PC-9 (cell line): ENCODE measurements at regions of chr11 and their contacts with region 1.

Region 1: GRCh38 chr11:62678770-62679696 is at the start of gene UBXN1:
- DNase-seq: peak; percentile 78 to 80
- H3K4me3 ChIP-seq: peak within 1 kb of the TSS; percentile 76
- H3K27ac ChIP-seq: peak within 1 kb of the TSS; percentile 37
- H3K4me1 ChIP-seq: peaks cover 29% of the 10 kb centered on the region
- H3K27me3 ChIP-seq: no peaks in the 10 kb centered on the region
- CTCF ChIP-seq: no peak
- total RNA-seq, gene UBXN1: 143 and 150 TPM in 2 replicates

Region 2: GRCh38 chr11:62621567-62622470 is 57.2 kb before region 1 on chr11 and contains the start of gene B3GAT3:
- CTCF ChIA-PET with region 1: no interaction called
- POLR2A ChIA-PET with region 1: no interaction called
- intact Hi-C with region 1: no loop called
- DNase-seq: peak; percentile 97 to 100
- H3K4me3 ChIP-seq: peak within 1 kb of the TSS; percentile 79
- H3K27ac ChIP-seq: peak within 1 kb of the TSS; percentile 86
- H3K4me1 ChIP-seq: peaks cover 20% of the 10 kb centered on the region
- H3K27me3 ChIP-seq: no peaks in the 10 kb centered on the region
- CTCF ChIP-seq: no peak
- total RNA-seq, gene B3GAT3: 38.9 and 60.5 TPM in 2 replicates

Region 3: DNA sequence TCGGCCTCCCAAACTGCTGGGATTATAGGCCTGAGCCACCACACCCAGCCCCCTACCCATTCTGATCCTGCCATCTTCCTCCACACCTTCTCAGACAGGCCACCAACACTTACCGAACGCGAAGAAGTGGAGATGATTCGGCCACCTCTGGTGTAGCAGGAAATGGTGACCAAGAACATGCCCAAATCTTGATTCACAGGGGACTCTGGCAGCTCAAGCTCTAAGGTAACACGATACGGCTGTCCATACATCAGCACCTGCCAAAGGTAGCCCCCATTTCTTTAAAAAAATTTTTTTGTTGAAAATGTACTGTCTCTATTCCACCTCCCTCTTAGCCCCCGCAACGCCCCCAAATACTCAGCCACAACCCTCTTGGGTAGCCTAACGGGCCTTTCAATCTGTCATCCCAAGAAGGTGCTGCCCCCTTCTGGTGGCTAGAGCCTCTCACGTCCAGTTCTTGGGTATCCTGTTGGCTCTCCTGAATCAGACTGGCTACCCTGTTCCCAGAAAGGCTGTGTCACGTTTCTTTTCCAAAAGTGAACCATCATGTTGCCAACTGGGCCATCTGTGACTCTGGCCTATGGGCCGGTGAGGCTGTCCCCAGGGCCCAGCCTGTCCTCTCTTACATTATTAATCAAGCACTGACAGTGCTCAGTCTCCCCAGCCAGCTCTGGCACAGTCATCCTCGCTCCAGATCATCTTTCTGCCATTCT is 15.6 kb after region 1 on chr11:
- CTCF ChIA-PET with region 1: interaction called, 15 read pairs
- POLR2A ChIA-PET with region 1: interaction called, 9 read pairs
- intact Hi-C with region 1: loop called (anchors 2 kb)
- DNase-seq: peak in 1 of 2 experiments; percentile 55
- H3K4me3 ChIP-seq: no peak overlapping the region
- H3K27ac ChIP-seq: no peak overlapping the region
- H3K4me1 ChIP-seq: no peaks in the 10 kb centered on the region
- H3K27me3 ChIP-seq: no peaks in the 10 kb centered on the region
- CTCF ChIP-seq: peak; percentile 86

Region 4: GRCh38 chr11:63227521-63228107 is 548.6 kb after region 1 on chr11:
- CTCF ChIA-PET with region 1: no interaction called
- POLR2A ChIA-PET with region 1: no interaction called
- intact Hi-C with region 1: no loop called
- DNase-seq: no peak
- H3K4me3 ChIP-seq: no peak overlapping the region
- H3K27ac ChIP-seq: no peak overlapping the region
- H3K4me1 ChIP-seq: no peaks in the 10 kb centered on the region
- H3K27me3 ChIP-seq: peaks cover 10% of the 10 kb centered on the region; the same call in 1 of the 2 replicates
- CTCF ChIP-seq: no peak